Common myeloid progenitor, CD34-positive (primary cell): ENCODE measurements at regions of chr16 and their contacts with region 1.

Region 1: DNA sequence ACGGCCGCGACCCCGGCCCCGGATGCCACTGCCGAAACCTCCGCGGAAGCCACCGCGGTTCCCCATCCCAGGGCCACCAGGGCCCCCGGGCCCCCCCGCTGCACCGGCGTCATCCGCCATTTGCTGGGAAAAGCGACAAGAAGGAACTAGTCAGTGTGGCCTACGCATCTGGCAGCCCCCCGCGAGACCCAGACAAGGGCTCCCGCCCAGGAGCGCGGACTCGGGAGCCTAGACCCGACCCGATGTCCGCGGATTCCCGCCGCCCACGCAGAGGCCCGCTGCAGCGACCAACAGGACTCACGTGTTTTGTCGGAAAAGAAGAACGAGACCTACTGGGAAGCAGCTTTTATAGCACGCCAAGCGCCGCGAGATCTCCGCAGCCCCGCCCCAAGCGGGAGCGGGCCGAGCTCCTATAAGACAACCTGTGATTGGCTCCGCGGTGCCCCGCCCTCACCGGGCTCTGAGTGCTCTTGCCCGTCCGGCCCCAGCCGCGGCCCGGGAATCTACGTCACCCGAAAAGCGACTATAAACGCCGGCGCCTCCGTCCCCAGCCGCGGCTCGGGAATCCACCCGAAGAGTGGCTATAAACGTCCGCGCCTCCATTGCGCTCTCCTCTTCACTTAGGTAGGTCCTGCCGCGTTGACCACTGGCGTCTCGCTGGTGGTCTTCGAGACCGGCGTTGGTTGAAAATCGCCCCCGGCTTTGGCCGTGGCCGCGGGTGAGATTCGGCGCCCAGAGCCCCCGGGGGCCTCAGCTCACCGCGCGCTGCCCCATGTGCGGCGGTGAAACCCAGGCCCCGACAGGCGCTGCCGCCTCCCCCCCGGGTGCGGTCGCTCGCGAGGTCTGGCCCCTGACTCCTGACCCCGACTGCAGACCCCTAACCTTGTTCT is at the start of gene RPS2:
- DNase-seq: peak; percentile 98 to 99 (median 99)
- H3K4me3 ChIP-seq: peak within 1 kb of the TSS; percentile 62 to 96 (median 89)
- H3K27ac ChIP-seq: peak within 1 kb of the TSS; percentile 95 to 98
- H3K4me1 ChIP-seq: peaks cover 0 to 47% (median 41%) of the 10 kb centered on the region in 4 experiments
- H3K27me3 ChIP-seq: no peaks in the 10 kb centered on the region

Region 2: GRCh38 chr16:1786242-1787058 is 178.3 kb before region 1 on chr16:
- CTCF ChIA-PET with region 1: no interaction called
- POLR2A ChIA-PET with region 1: no interaction called
- DNase-seq: no peak
- H3K4me3 ChIP-seq: no peak overlapping the region
- H3K27ac ChIP-seq: no peak overlapping the region
- H3K4me1 ChIP-seq: peaks cover 0 to 15% (median 14%) of the 10 kb centered on the region in 4 experiments
- H3K27me3 ChIP-seq: no peaks in the 10 kb centered on the region

Region 3: GRCh38 chr16:1913327-1914083 is 51.2 kb before region 1 on chr16:
- CTCF ChIA-PET with region 1: no interaction called
- POLR2A ChIA-PET with region 1: no interaction called
- DNase-seq: no peak
- H3K4me3 ChIP-seq: no peak overlapping the region
- H3K27ac ChIP-seq: no peak overlapping the region
- H3K4me1 ChIP-seq: peaks cover 0 to 1% (median under 1%) of the 10 kb centered on the region in 4 experiments
- H3K27me3 ChIP-seq: peaks cover 0 to 67% (median 31%) of the 10 kb centered on the region in 5 experiments

Region 4: GRCh38 chr16:1942810-1943726 is 21.7 kb before region 1 on chr16 and contains the start of gene MSRB1:
- CTCF ChIA-PET with region 1: interaction called, 3 read pairs
- POLR2A ChIA-PET with region 1: interaction called, 11 read pairs
- DNase-seq: peak; percentile 97 to 98 (median 98)
- H3K4me3 ChIP-seq: peak within 1 kb of the TSS; percentile 66 to 85 (median 83)
- H3K27ac ChIP-seq: peak within 1 kb of the TSS in 1 of 2 experiments; percentile 79
- H3K4me1 ChIP-seq: peaks cover 3 to 25% (median 19%) of the 10 kb centered on the region in 4 experiments
- H3K27me3 ChIP-seq: no peaks in the 10 kb centered on the region